ENCODE measurements at regions of chr9 and their contacts with region 1.

Region 1: DNA sequence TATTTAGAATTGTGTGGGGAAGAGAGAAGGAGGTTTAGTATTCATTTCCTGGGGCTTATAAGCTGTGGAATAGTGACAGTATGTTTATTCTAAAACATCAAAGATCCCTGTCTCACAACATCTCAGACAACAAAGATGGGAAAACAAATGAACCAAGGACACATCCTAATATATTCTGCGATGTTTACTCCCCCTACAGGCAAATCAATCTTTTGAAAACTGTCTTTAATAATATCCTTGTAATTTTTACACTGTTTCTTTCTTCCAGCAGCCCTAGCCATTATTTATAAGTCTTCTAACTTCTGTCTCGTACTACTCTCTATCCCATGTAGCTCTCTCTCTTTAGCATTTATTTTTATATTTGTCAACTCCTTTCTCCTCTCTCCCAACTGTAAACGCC is 33.5 kb upstream of the TMEM252 start:
- DNase-seq: no peak
- H3K4me3 Mint-ChIP-seq: no peak overlapping the region
- H3K27ac Mint-ChIP-seq: no peak overlapping the region
- H3K4me1 Mint-ChIP-seq: no peaks in the 10 kb centered on the region
- H3K27me3 Mint-ChIP-seq: peaks cover 78% of the 10 kb centered on the region
- CTCF ChIP-seq: peak; percentile 13

Region 2: GRCh38 chr9:68515326-68515901 is 58.7 kb before region 1 on chr9:
- CTCF ChIA-PET with region 1: interaction called, 12 read pairs
- POLR2A ChIA-PET with region 1: interaction called, 3 read pairs
- intact Hi-C with region 1: no loop called
- DNase-seq: peak; percentile 84
- H3K4me3 Mint-ChIP-seq: peak overlapping the region; percentile 6
- H3K27ac Mint-ChIP-seq: peak overlapping the region; percentile 94
- H3K4me1 Mint-ChIP-seq: peaks cover 18% of the 10 kb centered on the region
- H3K27me3 Mint-ChIP-seq: no peaks in the 10 kb centered on the region
- CTCF ChIP-seq: no peak

Region 3: DNA sequence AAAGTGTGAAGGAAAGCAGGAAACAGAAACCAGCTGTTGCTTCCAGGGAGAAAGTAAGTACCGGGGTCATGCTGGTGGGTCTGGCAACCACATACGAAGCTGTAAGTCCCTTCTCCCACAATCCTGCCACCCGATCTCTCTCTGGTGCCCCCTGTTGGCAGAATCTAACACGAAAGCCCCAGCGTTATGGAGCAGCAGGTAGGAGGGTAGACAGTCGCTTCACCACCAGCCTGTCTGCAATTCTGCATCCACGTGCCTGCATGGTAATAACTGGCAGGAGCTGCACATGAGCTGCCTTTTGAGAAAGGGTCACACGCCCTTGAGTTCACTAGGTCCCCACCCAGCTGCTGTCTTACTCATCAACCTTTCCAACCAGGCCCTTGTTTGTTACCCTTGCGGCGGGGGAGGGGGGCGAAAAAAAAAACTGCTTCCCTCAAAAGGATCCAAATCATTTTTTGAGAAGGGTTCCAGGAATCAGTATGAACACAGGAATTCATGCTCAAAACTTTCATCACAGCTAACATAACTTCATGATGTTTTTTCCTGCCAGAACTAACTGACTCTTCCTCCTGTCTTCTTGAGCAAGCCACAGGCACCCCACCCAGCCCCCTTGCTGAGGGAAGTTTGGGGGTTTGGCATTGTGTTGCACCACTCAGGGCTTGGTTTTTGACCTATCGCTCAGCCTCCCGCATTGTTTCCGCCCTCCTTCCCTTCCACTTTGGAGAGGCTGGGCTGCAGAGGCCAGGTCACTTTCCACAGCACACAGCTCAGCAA is 13.9 kb before region 1 on chr9:
- CTCF ChIA-PET with region 1: interaction called, 37 read pairs
- POLR2A ChIA-PET with region 1: no interaction called
- intact Hi-C with region 1: no loop called
- DNase-seq: peak; percentile 50
- H3K4me3 Mint-ChIP-seq: no peak overlapping the region
- H3K27ac Mint-ChIP-seq: no peak overlapping the region
- H3K4me1 Mint-ChIP-seq: no peaks in the 10 kb centered on the region
- H3K27me3 Mint-ChIP-seq: peaks cover 17% of the 10 kb centered on the region
- CTCF ChIP-seq: peak; percentile 28

Region 4: DNA sequence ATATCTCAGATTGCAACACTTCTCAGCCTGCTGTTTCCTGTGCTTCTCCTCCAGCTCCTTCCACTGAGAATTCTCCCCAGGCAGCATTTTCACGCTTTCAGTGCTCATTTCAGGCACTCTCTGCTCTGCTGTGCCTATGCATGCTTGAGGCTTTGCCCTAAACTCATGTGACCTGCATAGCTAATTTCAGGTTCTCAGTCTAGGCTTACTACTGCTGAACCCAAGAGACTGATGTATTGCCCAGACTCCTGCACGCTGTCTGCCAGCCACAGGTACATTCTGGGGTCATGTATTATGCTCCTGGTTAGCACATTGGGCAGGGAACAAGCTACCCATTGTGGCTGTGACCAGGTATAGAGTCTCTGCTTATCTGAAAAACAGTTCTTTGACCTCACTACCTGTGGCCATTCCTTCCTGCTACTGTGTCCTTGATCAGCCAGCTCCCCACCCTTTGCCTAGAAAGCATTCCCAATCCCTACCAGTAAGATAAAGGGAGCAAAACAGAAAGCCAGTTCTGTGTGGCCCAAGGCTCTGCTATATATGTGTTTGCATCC is 165.5 kb after region 1 on chr9:
- CTCF ChIA-PET with region 1: no interaction called
- POLR2A ChIA-PET with region 1: no interaction called
- intact Hi-C with region 1: no loop called
- DNase-seq: no peak
- H3K4me3 Mint-ChIP-seq: no peak overlapping the region
- H3K27ac Mint-ChIP-seq: no peak overlapping the region
- H3K4me1 Mint-ChIP-seq: no peaks in the 10 kb centered on the region
- H3K27me3 Mint-ChIP-seq: peaks cover 37% of the 10 kb centered on the region
- CTCF ChIP-seq: no peak

Measured in MCF 10A (cell line).